H1 (cell line): ENCODE measurements at regions of chr9 and their contacts with region 1.

Region 1: DNA sequence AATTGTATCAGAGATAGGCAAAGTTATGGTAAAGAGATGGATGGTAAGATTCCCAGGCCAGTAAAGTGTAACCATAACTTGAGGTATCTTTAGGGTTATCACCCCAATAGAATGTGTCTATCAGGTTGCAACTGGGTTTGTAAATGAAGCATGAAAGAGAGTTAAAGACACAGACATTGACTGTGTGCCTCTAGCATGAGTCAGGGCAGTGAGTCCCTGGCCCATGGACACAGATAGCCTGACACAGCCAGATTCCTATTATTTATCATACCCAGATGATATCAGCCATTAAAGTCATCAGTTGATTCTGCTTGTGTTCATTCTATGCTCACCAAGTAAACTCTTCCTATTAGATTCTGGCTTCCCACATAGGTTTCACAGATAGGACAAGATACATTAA is 33.5 kb upstream of the SNAPC3 start:
- DNase-seq: no peak
- H3K4me3 ChIP-seq: no peak overlapping the region
- H3K27ac ChIP-seq: no peak overlapping the region
- H3K4me1 ChIP-seq: no peaks in the 10 kb centered on the region
- H3K27me3 ChIP-seq: no peaks in the 10 kb centered on the region
- CTCF ChIP-seq: no peak
- EP300 ChIP-seq: no peak
- POLR2A ChIP-seq: no peak
- RAD21 ChIP-seq: no peak

Region 2: DNA sequence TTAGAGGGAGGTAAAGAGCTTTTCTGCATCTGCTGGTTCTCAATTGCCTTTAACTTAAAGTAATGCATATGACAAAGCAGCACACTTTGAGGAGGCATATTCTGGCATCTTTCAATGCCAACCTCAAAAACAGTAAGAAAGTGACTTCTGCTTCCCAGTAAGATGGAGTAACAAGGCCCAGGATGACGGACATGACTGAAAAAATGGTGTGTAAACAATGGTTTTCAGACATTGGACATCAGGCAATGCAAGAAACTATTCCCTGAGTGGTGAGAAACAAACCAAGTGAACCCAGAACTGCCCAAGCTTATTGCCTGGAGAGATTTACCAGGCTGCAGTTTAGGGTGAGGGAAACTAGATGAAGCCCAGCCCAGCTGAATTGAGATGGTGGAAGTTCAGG is 42.3 kb before region 1 on chr9:
- CTCF ChIA-PET with region 1: no interaction called
- POLR2A ChIA-PET with region 1: no interaction called
- DNase-seq: no peak
- H3K4me3 ChIP-seq: no peak overlapping the region
- H3K27ac ChIP-seq: no peak overlapping the region
- H3K4me1 ChIP-seq: peaks cover 0 to 4% (median 1%) of the 10 kb centered on the region in 4 experiments; a peak in 1 of 7 replicates
- H3K27me3 ChIP-seq: no peaks in the 10 kb centered on the region
- CTCF ChIP-seq: no peak
- EP300 ChIP-seq: no peak
- POLR2A ChIP-seq: no peak
- RAD21 ChIP-seq: no peak

Region 3: DNA sequence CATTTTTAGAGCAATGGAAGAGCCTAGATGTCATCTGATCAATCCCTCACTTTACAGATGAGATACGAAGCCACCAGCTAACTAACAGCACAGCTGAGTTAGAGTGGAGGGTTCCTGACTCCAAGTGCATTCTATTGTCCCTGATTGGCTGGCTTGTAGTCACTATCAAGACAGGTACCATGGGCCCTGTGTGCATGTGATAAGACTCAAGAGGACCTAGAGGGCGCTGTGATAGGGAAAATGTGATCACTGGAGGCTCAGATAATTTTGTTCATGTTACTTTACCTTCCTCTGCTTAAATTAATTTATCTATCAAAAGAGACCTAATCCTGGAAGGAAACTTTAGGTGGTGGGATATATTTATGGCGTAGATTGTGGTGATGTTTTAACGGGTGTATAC is 14.0 kb after region 1 on chr9:
- CTCF ChIA-PET with region 1: interaction called, 12 read pairs
- POLR2A ChIA-PET with region 1: no interaction called
- DNase-seq: no peak
- H3K4me3 ChIP-seq: no peak overlapping the region
- H3K27ac ChIP-seq: no peak overlapping the region
- H3K4me1 ChIP-seq: peaks cover 0 to 3% (median 0%) of the 10 kb centered on the region in 4 experiments; a peak in 1 of 7 replicates
- H3K27me3 ChIP-seq: no peaks in the 10 kb centered on the region
- CTCF ChIP-seq: peak; percentile 45 to 84 (median 63)
- EP300 ChIP-seq: no peak
- POLR2A ChIP-seq: no peak
- RAD21 ChIP-seq: peak; percentile 28 to 59; a peak in 3 of 4 replicates